ENCODE measurements at regions of chr11 and their contacts with region 1.

Region 1: DNA sequence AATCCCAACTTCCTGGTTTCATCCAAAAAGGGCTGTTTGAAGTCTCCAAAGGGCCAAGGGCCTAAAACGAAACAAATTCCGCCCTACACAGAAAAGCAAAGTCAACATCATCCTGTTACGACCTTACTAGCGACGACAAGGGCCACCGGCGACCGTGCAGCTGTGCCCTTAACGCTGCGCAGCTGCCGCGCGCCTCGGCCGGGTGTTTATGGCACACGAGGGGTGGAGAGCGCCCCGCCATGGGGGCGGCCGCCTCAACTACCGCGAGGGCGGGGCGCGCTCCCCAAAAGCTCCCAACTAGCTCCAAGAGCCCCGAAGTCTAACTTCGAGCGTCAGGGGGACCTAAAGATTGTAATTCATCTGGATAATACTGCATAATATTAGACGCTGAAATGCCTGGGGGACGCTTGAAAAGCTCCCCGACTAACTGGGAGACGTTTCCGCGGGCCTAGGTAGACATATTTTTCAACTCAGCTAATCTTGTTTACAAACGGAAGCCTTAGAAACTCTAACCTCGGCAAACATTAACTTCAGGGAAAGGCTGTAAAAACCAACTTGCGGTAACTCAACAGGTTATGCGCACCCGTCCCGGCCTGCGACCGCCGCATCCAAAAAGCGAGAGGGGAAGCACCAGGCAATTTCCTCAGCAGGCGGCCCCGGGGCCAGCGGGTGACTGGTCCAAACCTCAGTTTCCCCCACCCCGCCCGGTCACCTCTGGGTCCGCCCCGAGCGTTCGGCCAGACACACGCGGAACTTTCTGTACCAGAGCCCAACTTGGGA is 694 bp downstream of the TMEM123 start:
- DNase-seq: peak; percentile 67 to 91 (median 78)
- ATAC-seq: peak; percentile 61
- H3K4me3 ChIP-seq: peak overlapping the region; percentile 93
- H3K4me3 Mint-ChIP-seq: peak overlapping the region; percentile 99
- H3K27ac ChIP-seq: peak overlapping the region; percentile 65 to 90
- H3K27ac Mint-ChIP-seq: peak overlapping the region; percentile 96
- H3K4me1 ChIP-seq: peaks cover 53% of the 10 kb centered on the region
- H3K4me1 Mint-ChIP-seq: peaks cover 84% of the 10 kb centered on the region
- H3K27me3 ChIP-seq: no peaks in the 10 kb centered on the region
- H3K27me3 Mint-ChIP-seq: no peaks in the 10 kb centered on the region
- CTCF ChIP-seq: no peak

Region 2: DNA sequence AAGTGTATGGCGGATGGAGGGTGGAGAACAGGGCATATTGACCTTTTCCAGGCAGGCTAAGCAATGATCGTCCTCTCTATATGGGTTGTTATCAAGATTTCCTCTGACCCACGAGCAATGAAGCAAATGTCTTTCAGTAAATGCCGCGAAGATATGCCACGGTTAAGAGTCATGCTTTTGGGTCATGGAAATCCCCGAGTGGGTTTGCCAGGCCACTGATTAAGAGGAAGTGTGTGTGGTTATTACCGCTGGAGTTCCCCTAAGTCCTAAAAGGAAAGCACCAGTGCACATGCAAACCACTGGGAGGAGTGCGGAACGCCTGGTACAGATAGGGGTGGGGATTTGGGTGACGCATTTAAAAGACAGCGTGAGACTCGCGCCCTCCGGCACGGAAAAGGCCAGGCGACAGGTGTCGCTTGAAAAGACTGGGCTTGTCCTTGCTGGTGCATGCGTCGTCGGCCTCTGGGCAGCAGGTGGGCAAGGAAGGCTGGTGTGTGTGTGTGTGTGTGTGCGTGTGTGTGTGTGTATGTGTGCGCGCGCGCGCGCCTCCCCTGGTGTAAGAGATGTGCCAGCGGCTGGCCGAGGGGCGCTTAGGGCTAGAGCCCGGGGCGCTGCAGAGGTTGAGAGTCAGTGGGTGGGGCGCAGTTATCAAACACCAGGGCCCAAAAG is 134.6 kb before region 1 on chr11 and contains the start of gene BIRC3:
- CTCF ChIA-PET with region 1: interaction called, 3 read pairs
- POLR2A ChIA-PET with region 1: interaction called, 11 read pairs
- intact Hi-C with region 1: no loop called
- DNase-seq: peak; percentile 74 to 99 (median 88)
- ATAC-seq: peak; percentile 83
- H3K4me3 ChIP-seq: peak within 1 kb of the TSS; percentile 91
- H3K4me3 Mint-ChIP-seq: peak within 1 kb of the TSS; percentile 97
- H3K27ac ChIP-seq: peak within 1 kb of the TSS; percentile 95 to 96
- H3K27ac Mint-ChIP-seq: peak within 1 kb of the TSS; percentile 93
- H3K4me1 ChIP-seq: peaks cover 42% of the 10 kb centered on the region
- H3K4me1 Mint-ChIP-seq: peaks cover 75% of the 10 kb centered on the region
- H3K27me3 ChIP-seq: no peaks in the 10 kb centered on the region
- H3K27me3 Mint-ChIP-seq: no peaks in the 10 kb centered on the region
- CTCF ChIP-seq: peak; percentile 34
- total RNA-seq, gene BIRC3: 115 to 124 TPM

Region 3: GRCh38 chr11:102367364-102367763 is 84.5 kb before region 1 on chr11:
- CTCF ChIA-PET with region 1: interaction called, 6 read pairs
- POLR2A ChIA-PET with region 1: interaction called, 6 read pairs
- intact Hi-C with region 1: loop called in 1 of 2 experiments (anchors 5 kb)
- DNase-seq: peak in 3 of 14 experiments; percentile 56 to 64 (median 60)
- ATAC-seq: peak; percentile 78
- H3K4me3 ChIP-seq: no peak overlapping the region
- H3K4me3 Mint-ChIP-seq: no peak overlapping the region
- H3K27ac ChIP-seq: no peak overlapping the region
- H3K27ac Mint-ChIP-seq: peak overlapping the region; percentile 75
- H3K4me1 ChIP-seq: no peaks in the 10 kb centered on the region
- H3K4me1 Mint-ChIP-seq: peaks cover 34% of the 10 kb centered on the region
- H3K27me3 ChIP-seq: no peaks in the 10 kb centered on the region
- H3K27me3 Mint-ChIP-seq: no peaks in the 10 kb centered on the region
- CTCF ChIP-seq: peak; percentile 59

Region 4: GRCh38 chr11:102382384-102382783 is 69.5 kb before region 1 on chr11:
- CTCF ChIA-PET with region 1: no interaction called
- POLR2A ChIA-PET with region 1: no interaction called
- intact Hi-C with region 1: no loop called
- DNase-seq: no peak
- ATAC-seq: no peak
- H3K4me3 ChIP-seq: no peak overlapping the region
- H3K4me3 Mint-ChIP-seq: no peak overlapping the region
- H3K27ac ChIP-seq: no peak overlapping the region
- H3K27ac Mint-ChIP-seq: no peak overlapping the region
- H3K4me1 ChIP-seq: no peaks in the 10 kb centered on the region
- H3K4me1 Mint-ChIP-seq: peaks cover 25% of the 10 kb centered on the region
- H3K27me3 ChIP-seq: no peaks in the 10 kb centered on the region
- H3K27me3 Mint-ChIP-seq: no peaks in the 10 kb centered on the region
- CTCF ChIP-seq: no peak

Region 5: GRCh38 chr11:102415304-102415916 is 36.5 kb before region 1 on chr11:
- CTCF ChIA-PET with region 1: interaction called, 4 read pairs
- POLR2A ChIA-PET with region 1: interaction called, 16 read pairs
- intact Hi-C with region 1: loop called (anchors 2 kb)
- DNase-seq: peak in 2 of 14 experiments; percentile 27 to 61
- ATAC-seq: peak; percentile 59
- H3K4me3 ChIP-seq: peak overlapping the region; percentile 19
- H3K4me3 Mint-ChIP-seq: peak overlapping the region; percentile 74
- H3K27ac ChIP-seq: peak overlapping the region; percentile 43 to 59
- H3K27ac Mint-ChIP-seq: peak overlapping the region; percentile 81
- H3K4me1 ChIP-seq: peaks cover 59% of the 10 kb centered on the region
- H3K4me1 Mint-ChIP-seq: peaks cover 97% of the 10 kb centered on the region
- H3K27me3 ChIP-seq: no peaks in the 10 kb centered on the region
- H3K27me3 Mint-ChIP-seq: no peaks in the 10 kb centered on the region
- CTCF ChIP-seq: no peak

Region 6: GRCh38 chr11:102438311-102439062 is 13.4 kb before region 1 on chr11:
- CTCF ChIA-PET with region 1: no interaction called
- POLR2A ChIA-PET with region 1: interaction called, 21 read pairs
- intact Hi-C with region 1: loop called in 1 of 2 experiments (anchors 2 kb)
- DNase-seq: peak in 8 of 14 experiments; percentile 38 to 60 (median 48)
- ATAC-seq: no peak
- H3K4me3 ChIP-seq: no peak overlapping the region
- H3K4me3 Mint-ChIP-seq: peak overlapping the region; percentile 40
- H3K27ac ChIP-seq: no peak overlapping the region
- H3K27ac Mint-ChIP-seq: peak overlapping the region; percentile 40
- H3K4me1 ChIP-seq: peaks cover 27% of the 10 kb centered on the region
- H3K4me1 Mint-ChIP-seq: peaks cover 92% of the 10 kb centered on the region
- H3K27me3 ChIP-seq: no peaks in the 10 kb centered on the region
- H3K27me3 Mint-ChIP-seq: no peaks in the 10 kb centered on the region
- CTCF ChIP-seq: no peak

Region 7: DNA sequence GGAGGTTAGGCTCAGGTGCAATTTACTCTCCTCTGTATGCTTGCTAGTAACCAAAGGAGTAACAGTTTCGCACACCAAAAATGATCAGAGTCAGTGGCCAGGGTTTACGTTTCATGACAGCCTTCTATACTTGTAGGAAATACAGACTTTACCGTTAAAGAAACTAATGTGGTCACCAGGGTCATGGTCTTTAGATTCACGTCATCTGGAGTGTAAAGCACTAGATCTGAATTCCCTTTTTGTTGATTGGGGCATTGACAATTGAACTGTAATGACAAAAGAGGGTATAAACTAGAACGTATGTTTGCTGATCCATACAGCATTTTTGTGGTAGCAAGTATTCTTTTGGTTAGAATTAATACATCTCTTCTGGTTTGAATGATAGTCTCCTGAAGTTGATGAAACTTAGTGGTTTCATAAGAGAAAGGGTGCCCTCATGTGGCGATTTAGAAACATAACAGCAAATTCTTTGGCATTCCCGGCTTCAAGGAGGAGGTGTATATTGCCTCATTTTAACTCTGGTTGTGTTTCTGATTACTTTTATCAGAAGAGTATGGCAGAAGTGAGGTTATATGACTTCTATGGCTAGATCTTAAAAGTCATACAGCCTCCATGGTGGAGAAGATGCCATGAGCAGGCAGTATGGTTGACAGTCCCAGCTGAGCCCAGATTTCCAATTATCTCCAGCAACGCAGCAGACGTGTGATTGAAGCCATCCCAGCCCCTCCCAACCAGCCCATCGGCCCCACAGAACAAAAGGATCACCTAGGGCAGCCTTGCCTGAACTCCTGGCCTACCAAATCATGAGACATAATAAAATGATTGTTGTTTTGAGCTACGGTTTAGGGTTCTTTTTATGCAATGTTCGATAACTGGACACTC is 43.5 kb after region 1 on chr11:
- CTCF ChIA-PET with region 1: interaction called, 3 read pairs
- POLR2A ChIA-PET with region 1: interaction called, 6 read pairs
- intact Hi-C with region 1: loop called (anchors 2 kb)
- DNase-seq: peak in 10 of 14 experiments; percentile 6 to 90 (median 28)
- ATAC-seq: peak; percentile 89
- H3K4me3 ChIP-seq: no peak overlapping the region
- H3K4me3 Mint-ChIP-seq: no peak overlapping the region
- H3K27ac ChIP-seq: no peak overlapping the region
- H3K27ac Mint-ChIP-seq: no peak overlapping the region
- H3K4me1 ChIP-seq: peaks cover 3% of the 10 kb centered on the region
- H3K4me1 Mint-ChIP-seq: peaks cover 7% of the 10 kb centered on the region
- H3K27me3 ChIP-seq: no peaks in the 10 kb centered on the region
- H3K27me3 Mint-ChIP-seq: peaks cover 6% of the 10 kb centered on the region
- CTCF ChIP-seq: peak; percentile 77